B cell (primary cell): ENCODE measurements at regions of chr3 and their contacts with region 1.

Region 1: DNA sequence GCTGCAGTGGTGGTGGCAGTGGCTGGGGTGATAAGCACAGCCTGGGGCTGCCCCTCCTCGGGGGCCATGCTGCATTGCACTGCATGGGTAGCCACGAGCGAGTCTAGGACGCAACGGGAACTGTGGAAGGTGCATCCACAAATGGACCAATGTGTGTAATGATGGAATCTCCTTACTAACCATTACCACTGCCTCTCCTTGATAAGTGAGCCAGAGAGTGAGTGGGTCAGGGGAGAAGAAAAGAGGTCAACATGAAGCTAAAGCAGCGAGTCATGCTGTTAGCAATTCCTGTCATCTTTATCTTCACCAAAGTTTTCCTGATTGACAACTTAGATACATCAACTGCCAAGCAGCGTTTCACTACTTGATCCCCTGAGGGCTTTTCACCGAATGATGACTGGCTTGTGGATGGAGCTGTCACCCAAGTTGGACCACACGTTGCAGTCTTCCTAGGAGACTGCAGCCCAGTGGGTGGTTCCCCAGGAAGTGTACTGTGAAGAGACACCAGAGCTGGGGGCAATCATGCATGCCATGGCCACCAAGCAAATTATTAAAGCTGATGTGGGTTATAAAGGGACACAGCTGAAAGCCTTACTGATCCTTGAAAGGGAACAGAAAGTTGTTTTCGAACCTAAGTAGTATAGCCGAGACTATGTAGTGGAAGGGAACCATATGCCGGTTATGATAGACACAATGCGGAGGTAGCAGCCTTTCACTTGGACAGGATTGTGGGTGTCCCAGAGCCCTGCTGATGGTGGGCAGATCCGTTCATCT is 20.6 kb downstream of the SAMD7 start:
- DNase-seq: peak; percentile 89
- ATAC-seq: peak; percentile 83
- H3K4me3 ChIP-seq: peak overlapping the region in 4 of 5 experiments; percentile 7 to 54 (median 34)
- H3K4me3 Mint-ChIP-seq: peak overlapping the region; percentile 82
- H3K27ac ChIP-seq: peak overlapping the region; percentile 83 to 86
- H3K27ac Mint-ChIP-seq: peak overlapping the region; percentile 97
- H3K4me1 ChIP-seq: peaks cover 49 to 53% of the 10 kb centered on the region in 2 donors
- H3K4me1 Mint-ChIP-seq: peaks cover 55% of the 10 kb centered on the region
- H3K27me3 ChIP-seq: no peaks in the 10 kb centered on the region
- H3K27me3 Mint-ChIP-seq: no peaks in the 10 kb centered on the region
- CTCF ChIP-seq: no peak

Region 2: DNA sequence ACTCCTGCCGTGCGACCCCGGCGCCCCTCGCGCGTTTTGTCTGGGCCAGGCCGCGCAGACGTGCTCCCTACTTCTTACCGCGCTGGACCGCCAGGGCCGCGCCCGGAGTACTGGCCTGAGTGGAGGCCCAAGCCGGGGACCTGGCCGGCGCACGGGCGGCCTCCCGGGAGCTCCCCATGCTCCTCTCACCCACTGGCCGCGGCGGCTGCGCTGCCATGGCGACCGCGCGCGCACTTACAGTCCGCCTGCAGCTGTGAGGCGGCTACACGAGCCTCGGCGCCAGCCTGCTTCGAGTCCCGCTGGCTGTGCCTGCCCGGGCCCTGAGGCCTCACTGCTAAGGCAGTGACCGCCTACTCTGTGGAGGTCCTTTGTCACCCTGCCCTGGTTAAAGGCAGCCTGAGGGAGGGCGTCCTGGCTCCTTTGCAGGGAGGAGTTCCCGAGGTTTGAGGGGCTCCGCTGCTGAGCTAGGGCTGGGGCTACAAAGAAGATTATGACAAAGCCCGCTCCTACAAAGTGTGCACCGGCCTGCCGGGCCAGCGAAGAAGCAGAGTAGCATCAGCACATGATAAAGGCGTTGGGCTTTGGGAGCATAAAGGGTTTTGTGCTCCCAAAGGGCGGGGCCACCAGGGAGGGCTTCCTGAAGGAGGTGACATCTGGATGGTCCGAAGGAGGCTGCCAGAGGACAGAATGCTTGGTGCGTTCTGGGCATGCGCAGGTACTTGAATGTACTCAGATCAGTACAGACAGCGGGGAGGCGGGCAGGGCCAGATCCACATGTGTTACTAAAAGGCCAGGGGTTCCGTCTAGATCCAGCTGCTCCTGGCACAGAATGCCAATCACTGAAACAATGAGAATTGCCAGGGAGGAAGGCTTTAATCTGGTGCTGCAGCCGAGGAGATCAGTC is 119.3 kb before region 1 on chr3 and contains the starts of genes LRRC34 and LRRIQ4:
- CTCF ChIA-PET with region 1: no interaction called
- POLR2A ChIA-PET with region 1: no interaction called
- intact Hi-C with region 1: loop called (anchors 2 kb)
- DNase-seq: peak; percentile 80
- ATAC-seq: peak; percentile 60
- H3K4me3 ChIP-seq: peak within 1 kb of the TSS; percentile 66 to 79 (median 69)
- H3K4me3 Mint-ChIP-seq: peak within 1 kb of the TSS; percentile 87
- H3K27ac ChIP-seq: peak within 1 kb of the TSS; percentile 46 to 77
- H3K27ac Mint-ChIP-seq: peak within 1 kb of the TSS; percentile 93
- H3K4me1 ChIP-seq: peaks cover 19 to 28% of the 10 kb centered on the region in 2 donors
- H3K4me1 Mint-ChIP-seq: peaks cover 34% of the 10 kb centered on the region
- H3K27me3 ChIP-seq: no peaks in the 10 kb centered on the region
- H3K27me3 Mint-ChIP-seq: no peaks in the 10 kb centered on the region
- CTCF ChIP-seq: no peak
- total RNA-seq, gene LRRC34: 7.1 and 11.8 TPM in 2 replicates
- total RNA-seq, gene LRRIQ4: 0.53 and 0.71 TPM in 2 replicates

Region 3: GRCh38 chr3:169945313-169945712 is 13.4 kb after region 1 on chr3:
- CTCF ChIA-PET with region 1: interaction called, 77 read pairs
- POLR2A ChIA-PET with region 1: interaction called, 9 read pairs
- intact Hi-C with region 1: loop called (anchors 1 kb)
- DNase-seq: peak; percentile 93
- ATAC-seq: peak; percentile 91
- H3K4me3 ChIP-seq: peak overlapping the region in 3 of 5 experiments; percentile 13 to 38 (median 15)
- H3K4me3 Mint-ChIP-seq: peak overlapping the region; percentile 79
- H3K27ac ChIP-seq: peak overlapping the region; percentile 79 to 81
- H3K27ac Mint-ChIP-seq: peak overlapping the region; percentile 91
- H3K4me1 ChIP-seq: peaks cover 82 to 88% of the 10 kb centered on the region in 2 donors
- H3K4me1 Mint-ChIP-seq: peaks cover 87% of the 10 kb centered on the region
- H3K27me3 ChIP-seq: no peaks in the 10 kb centered on the region
- H3K27me3 Mint-ChIP-seq: no peaks in the 10 kb centered on the region
- CTCF ChIP-seq: peak; percentile 11

Region 4: GRCh38 chr3:169966428-169966950 is 34.6 kb after region 1 on chr3 and contains the start of gene SEC62:
- CTCF ChIA-PET with region 1: interaction called, 181 read pairs
- POLR2A ChIA-PET with region 1: interaction called, 95 read pairs
- intact Hi-C with region 1: loop called (anchors 1 kb)
- DNase-seq: peak; percentile 97
- ATAC-seq: peak; percentile 88
- H3K4me3 ChIP-seq: peak within 1 kb of the TSS; percentile 59 to 88 (median 85)
- H3K4me3 Mint-ChIP-seq: peak within 1 kb of the TSS; percentile 90
- H3K27ac ChIP-seq: peak within 1 kb of the TSS; percentile 98 to 99
- H3K27ac Mint-ChIP-seq: peak within 1 kb of the TSS; percentile 95
- H3K4me1 ChIP-seq: peaks cover 45 to 74% of the 10 kb centered on the region in 2 donors
- H3K4me1 Mint-ChIP-seq: peaks cover 77% of the 10 kb centered on the region
- H3K27me3 ChIP-seq: no peaks in the 10 kb centered on the region
- H3K27me3 Mint-ChIP-seq: no peaks in the 10 kb centered on the region
- CTCF ChIP-seq: peak; percentile 57
- total RNA-seq, gene SEC62: 166 and 176 TPM in 2 replicates

Region 5: DNA sequence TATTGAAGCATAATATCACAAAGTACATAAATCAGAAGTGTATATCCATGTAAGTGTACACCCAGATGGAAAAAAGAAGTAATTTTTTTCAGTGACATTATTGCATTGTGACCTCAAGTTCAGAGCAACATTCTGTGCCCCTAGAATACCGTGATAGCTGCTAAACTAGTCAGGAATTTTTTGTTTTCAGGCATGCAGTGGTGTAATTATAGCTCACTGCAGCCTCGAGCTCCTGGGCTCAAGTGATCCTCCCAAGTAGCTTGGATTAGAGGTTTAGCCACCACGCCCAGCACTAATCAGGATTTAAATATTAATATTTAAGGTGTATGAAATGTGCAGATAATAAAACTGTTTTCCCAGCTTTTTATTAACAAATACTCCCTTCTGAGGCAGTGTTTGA is 60.2 kb after region 1 on chr3:
- CTCF ChIA-PET with region 1: interaction called, 10 read pairs
- POLR2A ChIA-PET with region 1: no interaction called
- intact Hi-C with region 1: no loop called
- DNase-seq: no peak
- ATAC-seq: no peak
- H3K4me3 ChIP-seq: no peak overlapping the region
- H3K4me3 Mint-ChIP-seq: no peak overlapping the region
- H3K27ac ChIP-seq: peak overlapping the region in 1 of 2 donors; percentile 38
- H3K27ac Mint-ChIP-seq: no peak overlapping the region
- H3K4me1 ChIP-seq: no peaks in the 10 kb centered on the region
- H3K4me1 Mint-ChIP-seq: peaks cover 9% of the 10 kb centered on the region
- H3K27me3 ChIP-seq: no peaks in the 10 kb centered on the region
- H3K27me3 Mint-ChIP-seq: no peaks in the 10 kb centered on the region
- CTCF ChIP-seq: no peak

Region 6: DNA sequence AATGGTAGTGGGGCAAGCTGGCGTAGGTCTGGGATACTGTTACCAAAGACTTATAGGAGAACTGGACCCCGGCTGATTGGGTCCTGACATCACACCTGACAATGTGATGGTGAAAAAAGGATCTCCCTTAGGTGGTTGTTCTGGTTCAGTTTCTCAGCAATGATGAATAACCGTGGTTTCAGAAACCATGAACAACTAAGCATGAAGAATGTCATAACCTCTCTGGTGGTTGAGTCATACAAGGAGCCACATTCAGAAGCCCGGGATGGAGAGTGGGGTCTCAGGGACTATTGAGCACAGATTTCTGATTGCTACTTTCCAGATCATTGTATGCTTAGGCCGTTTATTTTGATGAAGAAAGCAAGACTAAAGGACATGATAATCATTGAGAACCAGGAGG is 123.3 kb after region 1 on chr3:
- CTCF ChIA-PET with region 1: interaction called, 14 read pairs
- POLR2A ChIA-PET with region 1: interaction called, 7 read pairs
- intact Hi-C with region 1: no loop called
- DNase-seq: no peak
- ATAC-seq: peak; percentile 37
- H3K4me3 ChIP-seq: peak overlapping the region in 2 of 5 experiments; percentile 18 to 21
- H3K4me3 Mint-ChIP-seq: peak overlapping the region; percentile 82
- H3K27ac ChIP-seq: no peak overlapping the region
- H3K27ac Mint-ChIP-seq: peak overlapping the region; percentile 67
- H3K4me1 ChIP-seq: peaks cover 23 to 25% of the 10 kb centered on the region in 2 donors
- H3K4me1 Mint-ChIP-seq: peaks cover 41% of the 10 kb centered on the region
- H3K27me3 ChIP-seq: no peaks in the 10 kb centered on the region
- H3K27me3 Mint-ChIP-seq: no peaks in the 10 kb centered on the region
- CTCF ChIP-seq: no peak